Prostate gland (tissue), 2 donors: ENCODE measurements at regions of chr7 and their contacts with region 1.

Region 1: DNA sequence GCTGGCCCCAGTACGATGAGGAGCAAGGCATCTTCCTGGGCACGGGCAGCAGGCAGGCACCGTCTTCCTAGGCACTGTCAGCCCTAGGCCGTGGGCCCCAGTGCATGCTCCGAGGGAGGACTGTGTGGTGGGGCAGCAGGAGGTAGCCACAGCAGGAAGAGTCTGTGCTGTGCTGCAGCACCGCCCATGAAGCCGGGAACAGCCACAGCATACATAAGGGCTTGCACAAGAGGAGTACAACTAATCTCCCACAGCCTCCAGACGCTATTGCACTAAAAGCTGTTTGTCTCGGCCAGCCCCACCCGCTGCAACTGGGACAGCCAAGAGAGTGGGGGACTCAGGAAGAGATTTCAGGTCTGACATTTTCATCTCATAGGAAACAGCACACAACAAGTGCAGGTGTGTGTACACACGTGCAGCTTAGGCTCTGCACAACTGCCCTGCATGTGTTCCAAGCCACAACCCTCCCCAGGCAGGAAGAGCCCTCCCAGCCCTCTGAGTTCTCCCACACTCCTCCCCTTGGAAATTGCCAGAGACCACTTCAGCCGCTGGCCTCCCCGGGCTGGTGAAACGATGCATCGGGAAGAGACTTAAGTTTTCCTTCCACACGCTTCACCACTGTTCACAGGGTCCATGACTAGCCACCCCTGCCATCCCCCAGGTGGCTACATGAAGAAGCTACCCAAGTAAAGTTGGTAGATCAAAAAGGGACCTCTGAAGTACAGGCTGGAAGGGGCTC is 88.1 kb upstream of the DDC start:
- DNase-seq: no peak
- H3K4me3 ChIP-seq: no peak overlapping the region
- H3K27ac ChIP-seq: peak overlapping the region; percentile 67 to 74
- H3K4me1 ChIP-seq: peaks cover 24% of the 10 kb centered on the region
- H3K27me3 ChIP-seq: no peaks in the 10 kb centered on the region
- CTCF ChIP-seq: no peak
- POLR2A ChIP-seq: no peak

Region 2: DNA sequence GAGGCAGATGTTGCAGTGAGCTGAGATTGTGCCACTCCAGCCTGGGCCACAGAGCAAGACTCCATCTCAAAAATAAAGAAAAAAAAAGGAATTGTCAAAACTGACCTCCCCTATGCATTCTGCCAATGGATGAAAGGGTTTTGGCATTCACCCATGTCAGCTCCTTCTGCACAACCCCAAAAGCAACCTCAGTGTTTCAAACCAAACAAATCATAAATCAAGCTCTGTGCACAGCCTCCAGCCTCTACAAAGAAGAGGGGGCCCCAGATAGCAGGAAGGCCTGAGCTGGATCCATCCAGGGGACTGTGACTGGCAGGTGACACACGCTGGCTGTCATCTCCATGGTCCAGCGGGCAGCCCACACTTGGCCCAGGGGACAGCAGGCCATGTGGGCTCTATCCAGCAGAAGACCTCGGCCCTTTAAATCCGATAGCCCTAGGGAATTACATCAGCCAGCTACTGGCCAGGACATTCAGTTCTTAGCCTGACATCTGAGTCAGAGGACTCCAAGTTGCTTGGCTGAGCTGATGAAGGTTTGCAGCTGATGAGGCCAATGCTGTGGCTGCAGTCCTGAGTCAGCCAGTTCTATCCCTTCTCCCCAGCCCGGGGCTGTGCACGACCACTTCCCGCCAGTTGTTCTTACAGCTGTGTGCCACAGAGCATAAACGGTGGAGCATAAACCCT is 151.2 kb before region 1 on chr7:
- intact Hi-C with region 1: loop called (anchors 5 kb)
- DNase-seq: no peak
- H3K4me3 ChIP-seq: no peak overlapping the region
- H3K27ac ChIP-seq: peak overlapping the region; percentile 53 to 59
- H3K4me1 ChIP-seq: no peaks in the 10 kb centered on the region
- H3K27me3 ChIP-seq: no peaks in the 10 kb centered on the region
- CTCF ChIP-seq: no peak
- POLR2A ChIP-seq: no peak

Region 3: GRCh38 chr7:50793115-50793946 is 140.0 kb after region 1 on chr7:
- intact Hi-C with region 1: loop called (anchors 10 kb)
- DNase-seq: peak; percentile 65
- H3K4me3 ChIP-seq: peak overlapping the region; percentile 60 to 67
- H3K27ac ChIP-seq: peak overlapping the region; percentile 81 to 83
- H3K4me1 ChIP-seq: no peaks in the 10 kb centered on the region
- H3K27me3 ChIP-seq: no peaks in the 10 kb centered on the region
- CTCF ChIP-seq: no peak
- POLR2A ChIP-seq: no peak